ENCODE measurements at regions of chr5 and their contacts with region 1.

Region 1: GRCh38 chr5:100903039-100903887 is at the start of gene ST8SIA4:
- DNase-seq: peak; percentile 90
- H3K4me3 Mint-ChIP-seq: peak within 1 kb of the TSS; percentile 96
- H3K27ac Mint-ChIP-seq: peak within 1 kb of the TSS; percentile 99
- H3K4me1 Mint-ChIP-seq: peaks cover 41% of the 10 kb centered on the region
- H3K27me3 Mint-ChIP-seq: no peaks in the 10 kb centered on the region
- total RNA-seq, gene ST8SIA4: 63.1 and 65.2 TPM in 2 replicates

Region 2: GRCh38 chr5:100623719-100624118 is 279.5 kb before region 1 on chr5:
- intact Hi-C with region 1: loop called (anchors 2 kb)
- DNase-seq: no peak
- H3K4me3 Mint-ChIP-seq: no peak overlapping the region
- H3K27ac Mint-ChIP-seq: no peak overlapping the region
- H3K4me1 Mint-ChIP-seq: no peaks in the 10 kb centered on the region
- H3K27me3 Mint-ChIP-seq: peaks cover 2% of the 10 kb centered on the region

Region 3: DNA sequence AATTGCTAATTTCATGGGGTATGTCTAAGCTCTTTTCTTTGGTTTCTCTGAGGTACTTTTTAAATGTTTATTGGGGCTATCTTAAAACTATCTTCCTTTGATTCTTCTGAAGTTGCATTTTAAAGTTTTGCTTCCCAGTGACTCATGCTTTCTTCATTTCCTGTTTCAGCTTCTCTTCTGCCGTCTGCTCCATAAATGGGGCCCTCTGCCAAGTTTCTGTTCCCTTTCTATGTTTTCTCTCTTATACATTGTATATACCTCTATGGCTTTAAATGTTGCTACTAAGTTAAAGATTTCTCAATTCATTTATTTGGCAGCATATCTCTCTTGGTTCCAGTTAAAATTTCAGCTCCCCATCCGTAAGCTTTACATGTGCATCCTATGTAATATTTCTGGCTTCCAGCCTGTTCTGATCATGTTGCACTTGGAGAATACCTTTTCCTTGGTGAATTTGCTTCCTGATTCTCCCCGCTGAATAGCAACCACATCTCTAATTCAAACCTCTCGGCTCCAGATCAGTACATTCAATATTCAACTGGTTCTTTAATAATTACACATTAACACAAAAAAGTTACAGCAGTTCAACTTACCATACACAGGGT is 125.5 kb before region 1 on chr5:
- intact Hi-C with region 1: loop called (anchors 1 kb)
- DNase-seq: no peak
- H3K4me3 Mint-ChIP-seq: peak overlapping the region; percentile 34
- H3K27ac Mint-ChIP-seq: peak overlapping the region; percentile 70
- H3K4me1 Mint-ChIP-seq: peaks cover 42% of the 10 kb centered on the region
- H3K27me3 Mint-ChIP-seq: no peaks in the 10 kb centered on the region

Region 4: GRCh38 chr5:100852988-100853449 is 50.2 kb before region 1 on chr5:
- intact Hi-C with region 1: loop called (anchors 1 kb)
- DNase-seq: no peak
- H3K4me3 Mint-ChIP-seq: peak overlapping the region; percentile 81
- H3K27ac Mint-ChIP-seq: peak overlapping the region; percentile 96
- H3K4me1 Mint-ChIP-seq: peaks cover 39% of the 10 kb centered on the region
- H3K27me3 Mint-ChIP-seq: no peaks in the 10 kb centered on the region

Region 5: DNA sequence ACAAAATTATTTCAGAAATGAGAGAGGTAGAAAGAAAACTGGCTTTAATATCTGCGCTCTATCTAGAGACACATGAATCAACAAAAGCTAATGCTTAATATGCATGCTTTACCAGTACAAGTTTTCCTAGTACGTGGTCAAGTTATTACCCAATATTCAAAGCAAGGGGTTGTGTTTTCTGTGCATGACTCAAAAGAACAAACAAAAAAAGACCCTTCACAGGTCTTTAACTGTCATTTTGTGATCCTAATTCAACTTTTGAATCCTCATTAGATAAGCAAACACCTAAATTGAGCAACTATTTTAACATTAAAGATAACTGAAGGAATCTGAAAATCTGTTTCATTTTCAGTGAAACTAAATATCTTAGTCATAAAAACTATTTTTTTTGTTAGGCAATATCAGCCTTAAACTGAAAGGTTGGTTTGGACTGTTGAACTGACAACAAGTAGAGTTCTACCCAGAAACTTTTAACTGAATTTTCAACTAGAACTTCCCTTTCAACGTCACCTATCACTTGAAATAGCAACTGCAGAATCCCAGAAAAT is 12.7 kb before region 1 on chr5:
- intact Hi-C with region 1: loop called (anchors 1 kb)
- DNase-seq: no peak
- H3K4me3 Mint-ChIP-seq: peak overlapping the region; percentile 81
- H3K27ac Mint-ChIP-seq: peak overlapping the region; percentile 94
- H3K4me1 Mint-ChIP-seq: peaks cover 85% of the 10 kb centered on the region
- H3K27me3 Mint-ChIP-seq: no peaks in the 10 kb centered on the region

Region 6: GRCh38 chr5:100974085-100974484 is 70.8 kb after region 1 on chr5:
- intact Hi-C with region 1: no loop called
- DNase-seq: no peak
- H3K4me3 Mint-ChIP-seq: no peak overlapping the region
- H3K27ac Mint-ChIP-seq: no peak overlapping the region
- H3K4me1 Mint-ChIP-seq: no peaks in the 10 kb centered on the region
- H3K27me3 Mint-ChIP-seq: peaks cover 8% of the 10 kb centered on the region

Region 7: DNA sequence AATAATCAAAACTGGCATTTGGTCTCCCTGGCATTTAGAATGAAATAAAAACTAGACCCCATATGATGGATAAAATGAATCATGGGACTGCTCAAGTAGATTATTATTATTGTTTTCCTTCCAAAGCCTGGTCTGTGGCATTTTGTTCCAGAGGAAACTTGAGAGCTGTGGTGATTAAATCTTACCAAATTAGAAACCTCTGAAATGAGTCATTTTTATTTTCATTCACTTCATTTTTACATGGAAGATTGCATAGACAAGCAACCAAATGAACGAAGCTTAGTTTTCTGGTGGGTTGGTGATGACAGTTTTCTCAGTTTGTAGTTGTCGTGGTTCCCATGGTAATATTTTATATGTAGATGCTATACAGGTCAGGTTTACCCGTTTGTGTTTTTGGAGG is 1875.2 kb after region 1 on chr5:
- intact Hi-C with region 1: loop called (anchors 5 kb)
- DNase-seq: no peak
- H3K4me3 Mint-ChIP-seq: peak overlapping the region; percentile 45
- H3K27ac Mint-ChIP-seq: peak overlapping the region; percentile 85
- H3K4me1 Mint-ChIP-seq: peaks cover 73% of the 10 kb centered on the region
- H3K27me3 Mint-ChIP-seq: no peaks in the 10 kb centered on the region